ENCODE measurements at regions of chr6 and their contacts with region 1.

Region 1: GRCh38 chr6:150891888-150892485 is 26.5 kb downstream of the MTHFD1L start:
- DNase-seq: peak in 4 of 5 donors; percentile 44 to 70 (median 60)
- ATAC-seq: peak; percentile 56 to 80 (median 78)
- H3K4me3 ChIP-seq: no peak overlapping the region
- H3K27ac ChIP-seq: no peak overlapping the region
- H3K4me1 ChIP-seq: peaks cover 0 to 19% (median 7%) of the 10 kb centered on the region in 12 donors
- H3K27me3 ChIP-seq: no peaks in the 10 kb centered on the region
- CTCF ChIP-seq: peak; percentile 79 to 90 (median 86)
- POLR2A ChIP-seq: no peak

Region 2: DNA sequence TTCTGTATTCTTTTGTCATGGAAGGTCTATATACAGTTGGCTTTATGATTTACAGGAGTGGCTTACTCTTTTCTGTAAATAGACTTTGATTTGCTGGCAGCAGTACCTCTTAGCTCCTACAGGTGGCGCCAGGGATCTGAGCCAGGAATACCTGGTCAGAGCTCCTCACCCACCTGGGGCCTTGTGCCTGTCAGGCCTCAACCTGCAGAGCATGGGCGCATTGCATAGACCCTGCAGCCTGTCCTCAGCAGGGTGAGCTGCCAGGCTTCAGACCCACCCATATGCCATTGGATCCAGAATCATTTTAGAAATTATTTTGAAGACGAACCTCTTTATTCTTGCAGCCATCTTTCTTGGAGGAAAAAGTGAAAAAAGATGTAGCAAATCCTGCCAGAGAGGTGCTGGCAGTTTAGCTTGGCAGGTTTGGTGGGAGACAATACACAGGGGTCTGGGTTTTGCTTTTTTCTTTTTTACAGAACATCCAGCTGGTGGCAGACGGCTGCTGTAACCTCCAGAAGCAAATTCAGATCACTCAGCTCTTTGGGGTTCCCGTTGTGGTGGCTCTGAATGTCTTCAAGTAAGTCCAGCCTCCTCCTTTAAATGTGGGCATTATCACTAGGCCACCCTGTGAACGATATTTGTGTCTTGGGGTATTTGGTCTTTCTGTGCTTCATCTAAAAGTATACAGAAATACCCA is 122.6 kb after region 1 on chr6:
- intact Hi-C with region 1: loop called (anchors 1 to 10 kb)
- DNase-seq: peak; percentile 61 to 73 (median 70)
- ATAC-seq: peak; percentile 45 to 79 (median 76)
- H3K4me3 ChIP-seq: peak overlapping the region in 5 of 12 donors; percentile 13 to 33 (median 24)
- H3K27ac ChIP-seq: no peak overlapping the region
- H3K4me1 ChIP-seq: peaks cover 0 to 11% (median 0%) of the 10 kb centered on the region in 12 donors
- H3K27me3 ChIP-seq: no peaks in the 10 kb centered on the region
- CTCF ChIP-seq: peak; percentile 93 to 99 (median 98)
- POLR2A ChIP-seq: no peak

Region 3: DNA sequence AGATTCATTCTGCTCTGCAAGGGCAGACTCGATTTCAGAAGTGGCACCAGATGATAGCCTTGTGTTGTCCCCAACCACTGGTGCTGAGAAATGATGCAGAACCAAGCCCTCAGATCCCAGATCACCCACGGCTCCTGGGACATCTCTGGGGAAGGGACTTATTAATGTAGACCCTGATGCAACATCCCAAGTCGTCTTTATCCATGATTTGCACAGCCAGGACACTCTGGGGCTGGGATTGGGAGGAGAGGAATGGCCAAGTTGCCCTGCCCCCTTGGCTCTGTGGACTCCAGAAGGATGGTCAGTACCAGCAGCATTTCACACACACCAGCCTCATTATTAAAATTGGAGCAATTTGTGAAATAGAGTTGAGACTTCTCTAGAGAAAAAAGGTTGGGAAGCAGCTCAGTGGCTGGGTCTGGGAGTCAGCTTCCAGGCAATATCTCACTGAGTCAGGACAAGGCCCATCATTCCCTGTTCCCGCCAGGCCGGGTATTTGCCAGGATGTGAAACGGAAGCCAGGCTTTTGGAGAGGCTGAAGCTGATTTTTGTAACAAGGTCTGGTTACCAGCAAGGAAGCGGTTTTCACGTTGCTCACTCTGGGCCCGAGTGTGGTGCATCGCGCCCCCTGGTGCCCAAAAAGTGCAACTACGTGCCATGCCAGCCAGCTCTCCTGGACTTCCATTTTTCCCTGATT is 432.0 kb after region 1 on chr6:
- intact Hi-C with region 1: loop called in 8 of 10 experiments (anchors 2 to 5 kb)
- DNase-seq: peak; percentile 80 to 88 (median 84)
- ATAC-seq: peak; percentile 85 to 94 (median 90)
- H3K4me3 ChIP-seq: no peak overlapping the region
- H3K27ac ChIP-seq: peak overlapping the region in 9 of 12 donors; percentile 20 to 83 (median 60)
- H3K4me1 ChIP-seq: peaks cover 0 to 30% (median 18%) of the 10 kb centered on the region in 12 donors
- H3K27me3 ChIP-seq: peaks cover 0 to 13% (median 0%) of the 10 kb centered on the region in 9 donors
- CTCF ChIP-seq: peak; percentile 96 to 99 (median 98)
- POLR2A ChIP-seq: no peak

Region 4: DNA sequence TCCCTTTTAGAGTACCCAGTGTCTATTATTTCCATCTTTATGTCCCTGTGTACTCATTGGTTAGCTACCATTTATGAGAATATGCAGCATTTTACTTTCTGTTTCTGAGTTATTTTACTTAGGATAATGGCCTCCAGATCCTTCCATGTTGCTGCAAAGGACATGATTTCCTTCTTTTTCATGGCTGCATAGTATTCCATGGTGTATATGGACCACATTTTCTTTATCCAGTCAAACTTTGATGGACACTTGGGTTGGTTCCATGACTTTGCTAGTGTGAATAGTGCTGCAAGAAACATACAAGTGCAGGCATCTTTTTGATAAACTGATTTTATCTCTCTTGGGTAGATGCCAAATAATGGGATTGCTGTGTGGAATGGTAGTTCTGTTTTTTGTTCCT is 443.9 kb after region 1 on chr6:
- intact Hi-C with region 1: loop called in 6 of 10 experiments (anchors 1 to 5 kb)
- DNase-seq: no peak
- ATAC-seq: no peak
- H3K4me3 ChIP-seq: no peak overlapping the region
- H3K27ac ChIP-seq: no peak overlapping the region
- H3K4me1 ChIP-seq: peaks cover 0 to 2% (median 0%) of the 10 kb centered on the region in 12 donors
- H3K27me3 ChIP-seq: no peaks in the 10 kb centered on the region
- CTCF ChIP-seq: no peak
- POLR2A ChIP-seq: no peak